Natural killer cell (primary cell): ENCODE measurements at regions of chr9 and their contacts with region 1.

Region 1: GRCh38 chr9:104927912-104928740 is at the start of gene ABCA1:
- DNase-seq: peak; percentile 35 to 84
- ATAC-seq: peak; percentile 58 to 70 (median 61)
- H3K4me3 ChIP-seq: peak within 1 kb of the TSS; percentile 53
- H3K4me3 Mint-ChIP-seq: peak within 1 kb of the TSS; percentile 88
- H3K27ac ChIP-seq: no peak within 1 kb of the TSS
- H3K27ac Mint-ChIP-seq: peak within 1 kb of the TSS in 1 of 2 donors; percentile 76
- H3K4me1 ChIP-seq: peaks cover 26% of the 10 kb centered on the region
- H3K4me1 Mint-ChIP-seq: peaks cover 25 to 27% of the 10 kb centered on the region in 2 donors
- H3K27me3 ChIP-seq: peaks cover 8% of the 10 kb centered on the region
- H3K27me3 Mint-ChIP-seq: peaks cover 22 to 24% of the 10 kb centered on the region in 2 donors
- CTCF ChIP-seq: no peak
- total RNA-seq, gene ABCA1: 1.9 to 10.8 (median 4.8) TPM

Region 2: DNA sequence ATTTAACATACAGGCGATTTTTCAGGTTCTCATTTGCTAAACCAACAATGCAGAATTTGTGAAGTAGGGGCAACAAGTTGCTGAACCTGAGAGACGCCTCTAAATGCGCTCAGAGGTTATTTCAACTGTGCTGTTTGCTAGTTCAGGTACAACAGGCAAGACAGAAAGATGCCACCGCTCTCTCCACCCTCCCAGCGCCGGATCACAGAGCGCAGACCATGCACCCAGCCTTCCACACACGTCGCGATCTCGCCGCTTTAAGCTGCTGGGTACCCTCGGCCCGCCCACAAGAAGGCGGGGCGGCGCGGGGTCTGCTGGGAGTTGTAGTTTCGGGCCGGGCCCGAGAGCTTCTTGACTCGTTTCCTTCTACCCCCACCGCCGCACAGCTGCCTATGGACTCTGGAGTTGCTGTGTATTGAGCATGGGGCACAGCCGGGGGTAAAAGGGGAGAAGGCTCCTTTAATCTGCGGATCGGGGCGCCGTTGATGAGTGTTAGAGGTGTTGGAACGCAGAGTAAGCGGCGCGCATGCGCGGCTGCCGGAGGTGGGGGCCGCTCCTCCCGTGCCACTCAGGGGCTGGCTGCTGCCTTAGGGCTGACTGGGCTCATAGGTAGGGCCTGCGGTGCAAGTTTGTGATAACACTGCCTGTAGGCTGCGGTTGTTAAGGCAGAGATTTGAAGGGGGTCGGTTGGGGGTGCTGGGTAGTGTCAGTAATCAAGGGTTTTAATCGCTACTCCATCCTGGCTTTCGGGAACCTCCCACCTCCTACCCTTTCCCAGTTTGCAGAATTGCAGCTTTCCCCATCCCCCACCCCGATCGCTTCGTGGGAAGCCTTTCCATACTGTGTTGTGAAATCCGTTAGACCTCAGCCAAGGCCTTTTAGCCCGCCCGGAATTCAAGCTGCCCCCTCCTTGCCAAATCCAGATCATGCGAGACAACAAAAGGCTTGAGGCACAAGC is 40.2 kb after region 1 on chr9:
- intact Hi-C with region 1: loop called (anchors 1 kb)
- DNase-seq: peak; percentile 88 to 91
- ATAC-seq: peak; percentile 98
- H3K4me3 ChIP-seq: peak overlapping the region; percentile 71
- H3K4me3 Mint-ChIP-seq: peak overlapping the region; percentile 97
- H3K27ac ChIP-seq: peak overlapping the region; percentile 41
- H3K27ac Mint-ChIP-seq: peak overlapping the region; percentile 81 to 86
- H3K4me1 ChIP-seq: peaks cover 13% of the 10 kb centered on the region
- H3K4me1 Mint-ChIP-seq: peaks cover 12 to 14% of the 10 kb centered on the region in 2 donors
- H3K27me3 ChIP-seq: no peaks in the 10 kb centered on the region
- H3K27me3 Mint-ChIP-seq: peaks cover 27 to 35% of the 10 kb centered on the region in 2 donors
- CTCF ChIP-seq: no peak

Region 3: GRCh38 chr9:105157130-105157583 is 229.0 kb after region 1 on chr9:
- intact Hi-C with region 1: loop called (anchors 2 kb)
- DNase-seq: peak; percentile 15 to 63
- ATAC-seq: peak; percentile 46 to 76 (median 67)
- H3K4me3 ChIP-seq: no peak overlapping the region
- H3K4me3 Mint-ChIP-seq: no peak overlapping the region
- H3K27ac ChIP-seq: no peak overlapping the region
- H3K27ac Mint-ChIP-seq: no peak overlapping the region
- H3K4me1 ChIP-seq: no peaks in the 10 kb centered on the region
- H3K4me1 Mint-ChIP-seq: peaks cover 0 to under 1% of the 10 kb centered on the region in 2 donors
- H3K27me3 ChIP-seq: no peaks in the 10 kb centered on the region
- H3K27me3 Mint-ChIP-seq: peaks cover 6% of the 10 kb centered on the region in 2 donors
- CTCF ChIP-seq: peak; percentile 45

Region 4: DNA sequence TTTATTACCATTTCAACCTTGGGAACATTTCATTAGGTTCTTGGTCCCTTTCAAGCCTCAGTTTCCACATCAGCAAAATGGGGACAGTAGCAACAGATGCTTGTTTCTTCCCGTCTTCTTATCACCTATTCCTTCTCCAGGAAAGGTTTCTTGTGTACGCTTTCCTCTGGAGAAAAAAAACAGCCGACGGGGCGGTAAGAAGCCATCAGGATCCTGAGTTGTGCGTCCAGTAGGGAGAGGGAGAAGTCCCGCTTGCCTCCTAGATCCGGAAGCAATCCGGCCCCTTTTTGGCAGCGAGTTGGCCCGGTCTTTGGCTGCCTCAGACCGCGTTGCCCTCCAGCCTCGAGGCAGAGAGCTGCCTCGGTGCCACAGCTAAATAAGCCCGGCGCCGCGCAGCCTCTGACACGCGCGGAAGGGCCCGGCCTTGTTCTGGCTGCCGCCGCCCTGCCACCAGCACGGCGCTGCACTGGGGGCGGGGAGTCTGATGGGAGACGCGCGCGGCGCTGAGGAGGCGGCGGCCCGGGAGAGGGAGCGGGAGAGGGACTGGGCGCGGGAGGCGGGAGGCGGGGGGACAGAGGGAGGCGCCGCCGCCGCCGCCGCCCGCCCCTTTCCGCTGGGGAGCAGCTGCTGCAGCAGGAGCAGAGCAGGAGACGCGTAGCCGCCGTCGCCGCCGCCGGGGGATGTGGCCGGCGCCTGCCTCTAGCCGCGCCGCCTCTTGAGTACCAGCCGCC is 316.0 kb after region 1 on chr9 and contains the start of gene SLC44A1:
- intact Hi-C with region 1: loop called (anchors 5 kb)
- DNase-seq: peak; percentile 82 to 94
- ATAC-seq: peak; percentile 81 to 92 (median 86)
- H3K4me3 ChIP-seq: peak within 1 kb of the TSS; percentile 70
- H3K4me3 Mint-ChIP-seq: peak within 1 kb of the TSS; percentile 95
- H3K27ac ChIP-seq: peak within 1 kb of the TSS; percentile 54
- H3K27ac Mint-ChIP-seq: peak within 1 kb of the TSS; percentile 74 to 95
- H3K4me1 ChIP-seq: peaks cover 12% of the 10 kb centered on the region
- H3K4me1 Mint-ChIP-seq: peaks cover 29 to 36% of the 10 kb centered on the region in 2 donors
- H3K27me3 ChIP-seq: peaks cover 8% of the 10 kb centered on the region
- H3K27me3 Mint-ChIP-seq: peaks cover 15 to 30% of the 10 kb centered on the region in 2 donors
- CTCF ChIP-seq: no peak
- total RNA-seq, gene SLC44A1: 7.1 to 8.3 (median 7.9) TPM

Region 5: DNA sequence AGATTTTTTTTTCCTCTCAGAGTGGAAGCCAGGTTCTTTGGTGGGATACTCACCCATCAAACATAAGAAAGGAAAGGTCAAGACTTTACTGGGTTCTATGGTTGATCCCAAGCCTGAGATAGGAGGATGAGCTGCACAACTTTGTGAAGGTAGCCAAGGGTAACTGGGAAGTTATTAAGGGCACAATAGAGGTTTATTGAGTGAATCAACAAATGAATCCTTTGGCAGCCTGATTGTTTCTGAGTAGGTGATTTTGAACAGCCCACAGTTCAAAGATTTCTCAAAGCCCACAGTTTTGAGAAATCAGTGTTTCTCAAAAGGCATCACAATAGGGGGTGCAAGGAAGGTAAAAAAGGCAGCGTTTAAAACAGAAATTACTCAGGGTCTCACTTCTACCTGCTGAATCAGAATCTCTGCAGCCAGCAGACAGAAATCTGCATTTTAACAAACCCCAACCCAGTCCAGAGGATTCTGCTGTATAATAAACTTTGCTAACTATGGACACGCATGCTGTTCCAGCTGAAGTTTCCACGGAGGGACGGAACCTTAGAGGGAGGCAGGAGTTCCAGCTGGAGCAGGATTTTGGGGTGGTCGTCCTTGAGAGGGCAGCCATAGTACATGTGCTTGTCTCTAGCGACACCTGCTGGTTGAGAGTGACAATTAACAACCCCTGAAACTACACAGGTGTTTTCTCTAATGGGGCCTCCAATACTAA is 487.0 kb after region 1 on chr9:
- intact Hi-C with region 1: loop called (anchors 10 kb)
- DNase-seq: peak; percentile 42 to 87
- ATAC-seq: peak; percentile 77 to 89 (median 81)
- H3K4me3 ChIP-seq: no peak overlapping the region
- H3K4me3 Mint-ChIP-seq: no peak overlapping the region
- H3K27ac ChIP-seq: no peak overlapping the region
- H3K27ac Mint-ChIP-seq: no peak overlapping the region
- H3K4me1 ChIP-seq: no peaks in the 10 kb centered on the region
- H3K4me1 Mint-ChIP-seq: peaks cover 5 to 6% of the 10 kb centered on the region in 2 donors
- H3K27me3 ChIP-seq: peaks cover 3% of the 10 kb centered on the region
- H3K27me3 Mint-ChIP-seq: peaks cover 27 to 42% of the 10 kb centered on the region in 2 donors
- CTCF ChIP-seq: peak; percentile 94